ENCODE measurements at regions of chrX and their contacts with region 1.

Region 1: DNA sequence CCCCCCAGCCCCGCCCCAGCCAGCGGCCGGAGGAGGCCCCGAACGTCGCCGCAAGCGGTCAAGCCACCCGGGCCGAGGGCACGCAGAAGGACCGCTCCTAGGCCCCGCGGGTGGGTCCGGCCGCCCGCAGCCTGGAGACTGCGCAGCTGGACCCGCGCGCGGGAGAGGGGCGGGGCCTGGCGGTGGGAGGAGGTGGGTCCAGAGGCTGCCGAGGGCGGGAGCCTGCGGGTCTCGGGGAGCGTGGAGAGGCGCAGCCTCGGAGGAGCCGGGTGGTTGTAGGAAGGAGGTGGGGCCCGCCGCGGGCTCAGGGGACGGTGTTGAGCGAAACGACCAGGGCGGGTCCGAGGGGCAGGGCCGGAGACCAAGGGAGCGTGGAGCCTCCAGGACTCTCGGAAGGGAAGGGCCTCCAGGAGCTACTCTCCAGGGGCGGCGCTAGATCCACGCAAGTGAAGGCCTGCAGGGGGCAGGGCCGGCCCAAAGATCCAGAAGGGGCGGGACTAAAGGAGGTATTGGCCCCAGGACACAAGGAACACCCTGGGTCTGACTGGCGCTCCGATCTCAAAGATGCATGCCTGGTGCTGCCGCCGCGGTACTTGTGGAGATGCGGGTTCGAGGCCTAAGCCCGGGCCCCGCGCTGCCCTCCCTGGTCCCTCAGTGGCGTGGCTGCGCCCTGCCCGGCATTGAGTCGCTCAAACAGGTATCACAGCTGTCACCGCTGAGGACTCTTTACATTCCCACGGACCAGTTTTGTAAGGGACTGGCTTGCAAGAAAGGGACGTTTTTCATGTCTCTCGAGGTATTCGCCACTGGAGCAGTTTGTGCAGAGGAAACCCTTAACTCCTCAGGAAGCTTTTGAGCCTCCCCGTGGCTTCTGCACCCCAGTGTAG is 5.9 kb downstream of the TIMM17B start:
- DNase-seq: peak; percentile 85
- H3K4me3 ChIP-seq: peak overlapping the region; percentile 48 to 51 (median 49)
- H3K27ac ChIP-seq: no peak overlapping the region
- H3K4me1 ChIP-seq: peaks cover 4% of the 10 kb centered on the region
- H3K27me3 ChIP-seq: no peaks in the 10 kb centered on the region
- CTCF ChIP-seq: peak; percentile 24 to 55

Region 2: DNA sequence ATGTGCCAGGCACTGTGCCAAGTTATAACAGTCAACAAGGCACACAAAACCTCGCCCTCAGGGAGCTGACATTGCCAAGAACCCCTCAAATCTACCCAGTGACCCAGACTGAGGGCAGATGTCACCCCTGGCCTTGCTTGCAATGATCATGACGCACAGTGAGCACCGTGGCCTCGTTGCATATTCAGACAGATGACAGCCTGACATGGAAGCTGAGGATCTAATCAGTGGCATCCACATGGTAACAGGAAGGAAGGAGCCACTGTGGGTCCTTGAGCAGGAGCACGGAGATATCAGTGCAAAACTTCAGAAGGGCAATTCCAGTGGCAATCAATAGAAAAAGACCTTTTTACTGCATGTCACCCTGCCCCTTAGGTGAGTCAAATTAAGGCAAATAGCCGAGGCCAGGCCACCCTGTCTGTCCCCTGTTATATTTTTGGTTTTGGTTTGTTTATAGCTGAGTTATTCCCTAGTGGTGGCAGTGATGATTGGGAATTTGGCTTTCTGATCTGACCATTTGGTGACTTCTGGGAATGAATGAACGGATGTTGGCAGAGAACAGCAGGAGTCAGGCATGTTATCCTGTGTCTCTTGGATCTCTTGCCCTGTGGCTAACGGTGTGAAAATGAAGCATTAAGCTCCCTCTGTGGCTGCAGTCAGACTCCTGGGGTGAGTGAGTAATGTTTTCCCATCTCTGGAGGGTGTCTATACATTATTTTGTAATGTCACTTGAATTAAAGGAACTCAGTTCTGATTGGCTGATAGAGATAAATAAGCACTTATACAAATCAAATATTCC is 273.9 kb before region 1 on chrX:
- CTCF ChIA-PET with region 1: no interaction called
- dilution Hi-C with region 1: no loop called
- in situ Hi-C with region 1: no loop called
- intact Hi-C with region 1: no loop called
- DNase-seq: no peak
- H3K4me3 ChIP-seq: no peak overlapping the region
- H3K27ac ChIP-seq: no peak overlapping the region
- H3K4me1 ChIP-seq: no peaks in the 10 kb centered on the region
- H3K27me3 ChIP-seq: no peaks in the 10 kb centered on the region
- CTCF ChIP-seq: no peak

Region 3: DNA sequence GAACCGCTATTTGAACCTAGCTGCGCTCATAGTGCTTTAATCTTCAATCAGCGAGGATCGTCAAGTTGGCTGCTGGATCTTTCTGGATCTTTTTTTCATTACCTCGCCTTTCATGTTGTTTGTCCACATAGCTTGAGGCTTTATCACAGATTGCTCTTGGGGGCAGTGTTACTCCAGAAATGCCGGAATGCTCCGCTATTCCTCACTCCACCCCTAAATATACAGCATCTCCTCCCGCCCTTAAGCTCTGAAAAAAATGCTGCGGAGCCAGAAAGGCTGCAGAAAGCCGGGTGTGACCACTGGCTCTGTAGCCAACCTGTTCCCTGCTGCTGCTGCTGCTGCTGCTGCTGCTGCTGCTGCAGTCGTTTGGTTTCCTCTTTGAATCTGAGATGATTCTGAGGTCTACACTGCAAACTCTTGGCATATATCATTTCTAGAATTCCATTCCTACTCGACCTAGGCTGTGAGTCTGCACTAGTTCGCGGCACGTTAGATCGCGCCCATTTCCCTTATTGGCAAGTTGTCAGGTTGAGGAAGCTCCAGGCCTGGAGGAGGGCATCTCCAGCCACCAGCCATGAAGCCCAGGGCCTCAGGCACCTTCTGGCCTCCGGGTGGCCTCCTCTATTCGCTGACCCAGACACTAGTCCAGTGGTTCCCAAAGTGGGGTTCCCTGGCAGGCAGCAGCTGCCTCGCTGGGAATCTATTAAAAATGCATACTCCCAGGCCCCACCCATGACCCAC is 260.1 kb before region 1 on chrX:
- CTCF ChIA-PET with region 1: no interaction called
- dilution Hi-C with region 1: no loop called
- in situ Hi-C with region 1: no loop called
- intact Hi-C with region 1: loop called (anchors 1 kb)
- DNase-seq: peak; percentile 85
- H3K4me3 ChIP-seq: no peak overlapping the region
- H3K27ac ChIP-seq: no peak overlapping the region
- H3K4me1 ChIP-seq: no peaks in the 10 kb centered on the region
- H3K27me3 ChIP-seq: no peaks in the 10 kb centered on the region
- CTCF ChIP-seq: peak; percentile 28 to 55

Region 4: GRCh38 chrX:48917139-48918001 is 25.7 kb after region 1 on chrX:
- CTCF ChIA-PET with region 1: no interaction called
- dilution Hi-C with region 1: no loop called
- in situ Hi-C with region 1: no loop called
- intact Hi-C with region 1: loop called (anchors 1 kb)
- DNase-seq: peak; percentile 82
- H3K4me3 ChIP-seq: peak overlapping the region; percentile 8 to 70 (median 66)
- H3K27ac ChIP-seq: peak overlapping the region; percentile 56
- H3K4me1 ChIP-seq: peaks cover 5% of the 10 kb centered on the region
- H3K27me3 ChIP-seq: no peaks in the 10 kb centered on the region
- CTCF ChIP-seq: peak; percentile 88 to 89